ENCODE measurements at regions of chr15 and their contacts with region 1.

Region 1: GRCh38 chr15:66946578-66947164 is 118.7 kb upstream of the SMAD3 start:
- DNase-seq: peak; percentile 81
- ATAC-seq: peak; percentile 59

Region 2: DNA sequence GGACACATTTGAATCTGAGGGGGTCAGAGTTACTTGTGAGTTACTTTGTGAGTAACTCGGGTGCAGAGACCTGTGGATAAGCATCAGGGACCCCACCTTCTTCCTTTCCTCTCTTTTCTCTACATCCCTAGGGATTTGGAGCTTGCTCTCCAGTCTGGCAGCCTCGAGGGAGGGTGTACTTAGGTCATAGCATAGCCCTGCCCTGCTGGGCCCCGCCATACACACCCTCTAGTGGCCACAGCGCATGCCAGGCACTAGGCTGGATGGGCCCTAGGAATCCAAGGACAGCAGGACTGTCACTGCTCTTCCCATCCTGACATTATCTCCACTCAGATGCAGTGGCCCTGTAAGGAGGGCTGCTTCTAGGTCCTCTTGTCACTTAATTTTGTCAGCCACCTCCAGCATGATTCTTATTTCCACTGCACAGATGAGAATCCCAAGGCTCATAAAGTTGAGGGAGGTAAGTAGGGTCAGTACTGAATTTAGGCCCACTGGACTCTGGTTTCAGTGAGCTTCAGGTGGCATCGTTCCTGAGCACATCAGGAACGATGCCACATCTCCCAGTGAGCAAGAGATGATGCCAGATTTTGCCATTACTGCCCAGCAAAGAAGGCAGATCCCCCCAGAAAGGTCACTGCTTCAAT is 248.2 kb before region 1 on chr15:
- intact Hi-C with region 1: no loop called
- DNase-seq: peak; percentile 80
- ATAC-seq: peak; percentile 29

Region 3: GRCh38 chr15:66838671-66839239 is 107.9 kb before region 1 on chr15:
- intact Hi-C with region 1: no loop called
- DNase-seq: no peak
- ATAC-seq: no peak

Region 4: GRCh38 chr15:66923438-66923881 is 23.2 kb before region 1 on chr15:
- intact Hi-C with region 1: no loop called
- DNase-seq: no peak
- ATAC-seq: no peak

Region 5: DNA sequence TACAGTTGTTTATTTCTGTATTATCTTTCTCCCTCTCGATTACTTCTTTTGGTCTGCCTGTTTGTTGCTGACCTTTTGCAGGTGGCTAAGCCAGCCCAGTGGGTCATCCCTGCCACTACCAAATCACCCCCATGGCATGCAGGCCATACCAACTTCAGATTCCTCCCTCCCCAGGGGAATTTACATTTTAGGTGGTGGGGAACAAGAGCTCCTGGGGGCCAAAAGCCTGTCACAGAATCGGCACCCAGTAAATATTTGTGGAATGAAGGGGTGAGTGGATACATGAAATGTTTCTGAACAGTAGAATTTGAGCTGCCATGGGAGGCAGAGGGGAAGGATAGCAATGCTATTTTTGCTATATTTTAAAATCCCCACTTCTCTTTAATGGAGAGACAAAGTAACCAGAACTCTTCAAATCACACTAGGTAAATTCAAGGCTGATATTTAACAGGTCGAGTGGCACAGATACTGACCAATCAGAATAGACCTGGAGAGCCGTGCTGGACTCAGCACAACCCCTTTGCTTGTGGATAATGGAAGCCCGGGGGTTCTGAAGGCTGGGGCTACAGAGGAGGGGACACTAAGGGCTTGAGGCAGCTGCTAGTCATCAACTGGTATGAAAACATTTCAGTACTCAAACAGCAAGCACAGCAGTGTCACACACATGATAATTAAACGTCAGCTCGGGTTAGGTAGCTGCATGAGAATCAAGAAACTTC is 64.4 kb after region 1 on chr15:
- intact Hi-C with region 1: no loop called
- DNase-seq: no peak
- ATAC-seq: no peak

Region 6: DNA sequence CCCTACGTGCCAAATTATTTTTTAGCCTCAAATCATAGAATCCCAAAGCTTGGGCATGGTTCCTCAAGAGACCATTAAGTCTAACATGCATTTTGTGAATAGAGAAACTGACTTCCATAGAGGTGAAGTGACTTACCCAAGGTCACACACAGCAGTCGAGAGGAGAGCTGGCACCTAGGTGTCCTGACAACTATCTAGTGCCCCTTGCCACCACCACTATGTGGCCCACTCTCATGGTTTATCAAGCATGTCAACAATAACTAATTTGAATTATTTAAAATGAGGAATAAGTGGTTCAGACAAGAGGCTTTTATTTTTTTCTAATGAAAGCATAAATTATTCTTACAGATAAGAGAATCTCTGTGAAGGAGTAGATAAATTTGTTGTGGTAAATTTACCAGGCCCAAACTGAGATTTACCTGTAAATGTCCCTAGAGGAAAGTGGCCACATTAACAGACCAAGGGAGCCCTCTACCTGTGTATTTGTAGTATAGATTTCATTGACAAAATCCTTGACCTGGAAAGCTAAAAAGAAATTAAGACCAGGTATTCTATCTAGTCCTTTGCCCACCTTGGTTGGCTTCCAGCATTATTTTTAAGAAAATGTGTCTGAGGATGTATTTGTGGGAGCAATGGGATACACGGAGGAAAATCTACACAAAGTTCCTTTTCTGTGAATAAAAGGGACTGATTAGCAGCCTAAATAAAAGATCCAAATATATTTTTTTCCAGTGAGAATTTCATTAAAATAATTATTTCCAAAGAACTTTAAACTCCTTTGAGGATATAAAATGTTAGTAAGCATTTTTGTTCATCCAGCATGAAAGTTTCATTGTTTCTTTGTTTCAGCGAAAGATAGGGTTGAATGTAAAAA is 357.1 kb after region 1 on chr15:
- intact Hi-C with region 1: loop called (anchors 1 kb)
- DNase-seq: no peak
- ATAC-seq: no peak

Region 7: DNA sequence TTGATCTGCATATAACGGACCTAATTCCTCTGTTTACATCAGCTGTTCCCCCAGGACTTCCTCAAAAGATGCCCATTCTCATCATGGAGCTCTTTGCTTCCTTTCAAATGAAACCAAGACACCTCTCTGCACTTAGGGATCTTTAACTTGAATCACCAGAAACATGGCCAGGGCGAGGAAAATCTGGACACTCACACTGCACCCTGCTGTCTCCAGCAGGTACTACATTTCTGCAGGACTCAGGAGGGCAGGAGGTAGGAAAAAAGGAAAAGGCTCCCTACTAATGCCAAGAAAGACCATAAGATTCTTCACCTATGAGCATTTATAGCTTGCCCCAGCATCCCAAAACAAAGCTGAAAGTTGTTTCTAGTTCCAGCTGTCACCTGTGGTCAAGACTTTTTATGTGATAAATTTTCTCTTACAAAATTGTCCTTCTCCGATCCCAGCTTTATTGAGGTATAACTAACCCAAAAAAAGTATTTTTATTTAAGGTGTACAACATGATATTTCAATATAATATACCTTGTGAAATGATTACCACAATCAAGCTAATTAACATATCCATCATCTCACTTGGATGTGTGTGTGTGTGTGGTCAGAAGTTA is 486.9 kb after region 1 on chr15:
- intact Hi-C with region 1: loop called (anchors 1 kb)
- DNase-seq: no peak
- ATAC-seq: peak; percentile 57